ENCODE measurements at regions of chr11 and their contacts with region 1.

Region 1: DNA sequence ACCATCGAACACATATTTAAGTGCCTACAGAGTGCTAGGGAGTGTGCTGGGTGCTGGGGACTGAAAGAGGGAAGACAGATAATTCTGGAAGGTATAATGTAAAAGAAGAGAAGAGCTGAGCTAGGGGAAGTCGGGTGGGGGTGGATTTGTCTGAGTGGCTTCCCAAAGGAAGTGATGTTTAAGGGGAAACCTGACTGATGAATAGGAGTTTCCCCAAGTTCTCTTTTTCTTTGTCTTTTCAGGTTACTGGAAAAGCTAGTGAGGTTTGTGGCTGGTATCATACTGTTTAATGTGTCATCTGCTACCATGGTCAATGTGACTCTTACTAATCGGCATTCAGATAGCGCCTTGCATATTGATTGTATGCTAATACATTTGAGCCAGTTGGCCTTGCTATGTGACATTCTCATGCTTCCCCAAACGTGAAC is 151.6 kb upstream of the MTMR2 start:
- DNase-seq: no peak
- ATAC-seq: peak in 1 of 8 donors; percentile 7
- H3K4me3 ChIP-seq: no peak overlapping the region
- H3K27ac ChIP-seq: peak overlapping the region in 8 of 10 donors; percentile 16 to 68 (median 46)
- H3K4me1 ChIP-seq: peaks cover 0 to 54% (median 22%) of the 10 kb centered on the region in 9 donors
- H3K27me3 ChIP-seq: no peaks in the 10 kb centered on the region
- CTCF ChIP-seq: no peak

Region 2: DNA sequence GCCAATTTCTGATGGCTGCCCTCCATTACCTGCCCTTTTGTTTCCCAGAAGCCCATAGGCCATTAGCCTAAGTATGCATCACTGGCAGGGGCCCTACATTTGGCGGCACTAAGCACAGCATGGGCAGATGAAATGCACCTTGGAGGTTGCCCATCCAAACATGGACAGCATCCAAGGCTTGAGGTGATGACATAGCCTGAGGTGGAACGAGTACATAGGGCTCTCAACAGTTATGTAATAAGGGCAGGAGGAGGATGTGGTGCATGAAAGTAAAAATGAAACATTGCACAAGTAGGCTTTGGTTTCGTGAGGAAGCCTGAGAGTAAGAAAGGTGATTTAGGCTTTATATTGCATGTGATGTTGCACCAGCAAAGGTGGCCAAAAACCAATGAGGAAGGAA is 434.1 kb before region 1 on chr11:
- intact Hi-C with region 1: no loop called
- DNase-seq: no peak
- ATAC-seq: no peak
- H3K4me3 ChIP-seq: no peak overlapping the region
- H3K27ac ChIP-seq: no peak overlapping the region
- H3K4me1 ChIP-seq: no peaks in the 10 kb centered on the region
- H3K27me3 ChIP-seq: no peaks in the 10 kb centered on the region
- CTCF ChIP-seq: no peak

Region 3: GRCh38 chr11:96149743-96150555 is 74.4 kb after region 1 on chr11:
- intact Hi-C with region 1: loop called in 1 of 10 experiments (anchors 10 kb)
- DNase-seq: no peak
- ATAC-seq: no peak
- H3K4me3 ChIP-seq: no peak overlapping the region
- H3K27ac ChIP-seq: peak overlapping the region in 1 of 10 donors; percentile 46
- H3K4me1 ChIP-seq: peaks cover 4 to 21% (median 17%) of the 10 kb centered on the region in 9 donors
- H3K27me3 ChIP-seq: no peaks in the 10 kb centered on the region
- CTCF ChIP-seq: no peak

Measured in heart right ventricle (tissue), 16 donors.